Dendritic cell treated with granulocyte-macrophage colony-stimulating factor and Interleukin-4, amounts not matched to agents 40 ng/mL and 50 ng/mL, for 4 days (primary cell): ENCODE measurements at regions of chr3 and their contacts with region 1.

Region 1: DNA sequence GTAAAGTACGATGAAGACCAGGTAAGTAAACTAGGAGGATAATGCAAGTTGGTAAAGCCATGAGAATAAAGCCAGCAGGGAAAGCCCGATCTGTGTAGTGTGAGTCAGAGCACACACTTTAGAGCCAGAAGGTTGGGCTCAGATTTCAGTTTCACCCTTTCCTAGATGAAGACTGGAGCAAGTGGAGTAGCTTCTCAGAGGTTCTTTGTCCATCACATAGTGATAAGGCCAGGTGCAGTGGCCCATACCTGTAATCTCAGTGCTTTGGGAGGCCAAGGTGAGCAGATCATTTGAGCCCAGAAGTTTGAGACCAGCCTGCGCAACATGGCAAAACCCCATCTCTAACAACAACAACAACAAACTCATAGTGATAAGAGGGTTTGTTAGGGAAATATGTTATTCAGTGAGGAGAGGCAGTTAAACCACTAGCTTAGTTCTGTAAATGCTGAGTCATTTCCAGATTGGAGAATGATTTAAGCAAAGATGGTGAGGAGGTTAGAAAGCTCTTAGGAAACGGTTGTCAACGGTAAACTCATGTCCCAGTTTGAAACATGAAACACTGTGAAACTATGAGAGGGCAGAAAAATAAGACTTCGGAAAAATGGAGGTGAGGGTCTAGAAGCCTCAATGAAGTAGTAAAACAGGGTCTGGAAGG is 39.0 kb downstream of the IL12A start:
- H3K4me3 Mint-ChIP-seq: no peak overlapping the region
- H3K27ac Mint-ChIP-seq: peak overlapping the region; percentile 16
- H3K4me1 Mint-ChIP-seq: peaks cover 16% of the 10 kb centered on the region
- H3K27me3 Mint-ChIP-seq: no peaks in the 10 kb centered on the region

Region 2: DNA sequence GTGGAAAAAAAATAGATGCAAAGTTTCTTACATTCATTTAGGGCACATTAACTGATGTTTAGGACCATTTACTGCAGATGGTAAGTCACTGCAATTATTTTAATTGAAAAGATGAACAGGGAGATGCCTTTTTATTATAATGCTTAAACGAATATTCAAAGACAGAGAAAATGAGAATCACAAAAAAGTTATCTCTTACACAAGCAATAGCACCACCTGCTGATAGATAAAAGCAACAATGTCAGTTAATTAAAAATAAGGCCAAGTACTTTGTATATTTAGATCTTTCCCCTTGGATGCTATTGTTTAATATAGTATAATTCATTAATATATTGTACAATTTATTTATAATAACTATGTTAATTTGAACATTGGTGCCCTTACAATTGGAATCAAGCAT is 315.5 kb after region 1 on chr3:
- intact Hi-C with region 1: loop called (anchors 5 kb)
- H3K4me3 Mint-ChIP-seq: no peak overlapping the region
- H3K27ac Mint-ChIP-seq: no peak overlapping the region
- H3K4me1 Mint-ChIP-seq: no peaks in the 10 kb centered on the region
- H3K27me3 Mint-ChIP-seq: no peaks in the 10 kb centered on the region

Region 3: DNA sequence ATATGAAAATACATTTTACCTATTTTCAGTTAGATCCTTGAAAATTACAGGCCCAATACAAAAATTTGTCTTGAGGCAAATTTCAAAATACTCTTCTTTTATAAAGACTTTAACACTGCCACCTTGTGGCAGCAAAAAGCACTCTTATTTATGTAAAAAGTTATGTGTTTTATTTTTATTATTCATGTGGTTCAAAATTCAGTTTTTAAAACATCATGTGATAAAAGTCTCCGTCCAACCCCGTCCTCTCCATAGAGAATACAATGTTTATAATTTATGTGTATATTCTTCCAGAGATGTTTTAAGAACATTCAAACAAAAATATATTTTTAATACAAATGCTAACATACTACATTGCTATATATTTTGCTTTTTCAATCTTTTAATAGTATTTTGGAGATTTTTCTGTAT is 458.8 kb after region 1 on chr3:
- intact Hi-C with region 1: loop called (anchors 2 kb)
- H3K4me3 Mint-ChIP-seq: no peak overlapping the region
- H3K27ac Mint-ChIP-seq: no peak overlapping the region
- H3K4me1 Mint-ChIP-seq: peaks cover 7% of the 10 kb centered on the region
- H3K27me3 Mint-ChIP-seq: no peaks in the 10 kb centered on the region